Activated B cell treated with CpG ODN at 0.5 μM for 24 hours (primary cell): ENCODE measurements at regions of chrX and their contacts with region 1.

Region 1: GRCh38 chrX:55867181-55867651 is 149.7 kb downstream of the RRAGB start:
- DNase-seq: no peak
- ATAC-seq: no peak
- H3K4me3 Mint-ChIP-seq: no peak overlapping the region
- H3K27ac Mint-ChIP-seq: no peak overlapping the region
- H3K4me1 Mint-ChIP-seq: peaks cover 13% of the 10 kb centered on the region
- H3K27me3 Mint-ChIP-seq: no peaks in the 10 kb centered on the region
- CTCF ChIP-seq: no peak

Region 2: GRCh38 chrX:55818687-55819375 is 48.4 kb before region 1 on chrX:
- CTCF ChIA-PET with region 1: no interaction called
- POLR2A ChIA-PET with region 1: no interaction called
- intact Hi-C with region 1: loop called (anchors 10 kb)
- DNase-seq: no peak
- ATAC-seq: no peak
- H3K4me3 Mint-ChIP-seq: no peak overlapping the region
- H3K27ac Mint-ChIP-seq: no peak overlapping the region
- H3K4me1 Mint-ChIP-seq: no peaks in the 10 kb centered on the region
- H3K27me3 Mint-ChIP-seq: no peaks in the 10 kb centered on the region
- CTCF ChIP-seq: no peak